WTC11 (cell line): ENCODE measurements at regions of chr1 and their contacts with region 1.

Region 1: DNA sequence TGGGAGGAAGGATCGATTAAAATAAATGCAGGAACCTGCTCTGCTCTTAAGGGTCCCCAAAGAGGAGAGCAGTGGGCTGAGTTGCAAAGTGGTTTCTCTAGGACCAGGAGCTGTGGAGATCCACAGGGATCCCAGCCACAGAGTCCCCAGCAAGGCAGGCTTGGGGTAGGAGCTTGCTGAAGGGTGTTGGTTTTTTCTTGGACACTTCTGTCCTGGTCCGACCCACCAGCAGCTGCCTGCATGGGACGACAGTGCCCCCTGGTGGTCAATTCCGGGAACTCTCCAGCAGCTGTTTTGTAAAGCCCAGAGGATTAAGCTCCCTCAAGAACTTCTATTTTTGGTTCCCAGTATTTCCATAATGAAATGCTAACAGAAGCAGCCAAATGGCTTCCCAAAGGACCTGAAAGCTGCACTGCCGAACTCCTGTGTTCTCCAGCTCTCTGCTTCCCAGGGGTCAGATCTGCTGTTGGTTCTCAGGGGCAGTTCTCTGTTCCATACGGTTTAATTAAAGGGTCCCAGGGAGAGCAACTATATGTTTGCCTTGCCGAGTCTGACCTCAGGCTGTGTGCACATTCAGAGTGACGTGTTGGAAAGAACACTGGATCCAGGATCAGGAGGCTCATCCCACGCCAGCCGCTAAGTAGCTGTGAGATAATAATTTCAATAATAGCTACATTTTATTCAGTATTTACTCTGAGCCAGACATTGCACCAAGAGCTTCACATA is 23.2 kb downstream of the NENF start:
- DNase-seq: peak; percentile 93
- ATAC-seq: peak; percentile 79
- H3K4me3 Mint-ChIP-seq: no peak overlapping the region
- H3K27ac Mint-ChIP-seq: no peak overlapping the region
- H3K4me1 Mint-ChIP-seq: no peaks in the 10 kb centered on the region
- H3K27me3 Mint-ChIP-seq: no peaks in the 10 kb centered on the region
- CTCF ChIP-seq: peak; percentile 99

Region 2: DNA sequence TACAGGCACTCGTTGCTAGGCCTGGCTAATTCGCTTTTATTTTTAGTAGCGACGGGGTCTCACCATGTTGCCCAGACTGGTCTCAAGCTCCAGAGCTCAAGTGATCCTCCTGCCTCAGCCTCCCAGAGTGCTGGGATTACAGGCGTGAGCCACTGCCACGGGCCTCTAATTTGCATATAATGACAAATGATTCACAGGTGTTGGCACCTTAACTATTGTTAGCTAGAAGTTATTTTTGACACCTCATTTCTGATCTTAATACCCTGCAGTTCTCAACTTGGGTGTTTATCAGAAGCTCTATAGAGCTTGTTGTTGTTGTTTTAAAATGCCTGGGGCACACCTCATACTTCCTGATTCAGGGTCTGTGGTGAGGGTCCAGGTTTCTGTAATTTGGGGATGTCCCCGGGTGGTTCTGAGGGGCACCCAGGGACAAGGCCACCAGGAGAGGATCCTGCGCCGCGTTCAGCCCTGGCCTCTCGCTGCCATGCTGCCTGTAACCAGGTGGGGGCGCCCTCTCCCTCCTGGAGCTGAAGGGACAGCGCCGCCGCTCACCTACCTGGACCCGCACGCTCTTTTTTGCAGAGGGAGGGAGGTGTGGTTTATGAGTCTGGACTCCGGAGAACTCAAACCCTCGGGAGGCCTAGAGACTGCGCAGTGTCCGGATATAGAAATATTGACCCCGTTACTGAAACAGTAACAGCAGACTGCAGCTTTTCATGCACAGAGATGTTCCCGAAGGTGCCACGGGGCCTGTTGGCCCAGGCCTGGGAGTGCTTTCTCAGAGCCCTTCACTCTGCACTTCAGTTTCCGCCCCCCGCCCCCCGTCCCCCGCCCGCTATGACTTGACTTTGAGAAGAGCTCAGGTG is 757.6 kb before region 1 on chr1:
- CTCF ChIA-PET with region 1: interaction called, 15 read pairs
- POLR2A ChIA-PET with region 1: no interaction called
- DNase-seq: peak; percentile 91
- ATAC-seq: peak; percentile 95
- H3K4me3 Mint-ChIP-seq: peak overlapping the region; percentile 80
- H3K27ac Mint-ChIP-seq: no peak overlapping the region
- H3K4me1 Mint-ChIP-seq: peaks cover 4% of the 10 kb centered on the region; the same call in 1 of the 2 replicates
- H3K27me3 Mint-ChIP-seq: peaks cover 31% of the 10 kb centered on the region
- CTCF ChIP-seq: peak; percentile 99

Region 3: GRCh38 chr1:212153635-212154034 is 302.3 kb before region 1 on chr1:
- CTCF ChIA-PET with region 1: no interaction called
- POLR2A ChIA-PET with region 1: no interaction called
- DNase-seq: no peak
- ATAC-seq: no peak
- H3K4me3 Mint-ChIP-seq: no peak overlapping the region
- H3K27ac Mint-ChIP-seq: no peak overlapping the region
- H3K4me1 Mint-ChIP-seq: peaks cover 6% of the 10 kb centered on the region
- H3K27me3 Mint-ChIP-seq: no peaks in the 10 kb centered on the region; the same call in 1 of the 2 replicates
- CTCF ChIP-seq: no peak

Region 4: DNA sequence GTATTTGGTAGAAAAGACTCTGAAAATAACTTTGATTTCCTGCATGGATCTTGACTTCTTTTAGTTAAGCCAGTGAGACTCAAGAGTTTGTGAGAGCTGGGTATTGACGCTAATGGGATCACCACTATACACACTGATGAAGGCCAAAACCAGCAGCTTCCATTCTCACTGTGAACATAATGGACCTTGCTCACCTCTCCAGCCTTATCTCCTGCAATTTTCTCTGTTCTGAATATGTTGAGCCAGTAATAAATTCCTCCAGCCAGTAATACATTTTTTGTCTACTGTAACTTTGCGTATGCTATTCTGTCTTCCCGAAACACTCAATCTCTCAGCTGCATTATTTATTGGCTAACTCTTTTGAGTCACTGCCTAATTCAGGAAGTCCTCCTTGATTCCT is 282.4 kb before region 1 on chr1:
- CTCF ChIA-PET with region 1: no interaction called
- POLR2A ChIA-PET with region 1: no interaction called
- DNase-seq: no peak
- ATAC-seq: no peak
- H3K4me3 Mint-ChIP-seq: no peak overlapping the region
- H3K27ac Mint-ChIP-seq: no peak overlapping the region
- H3K4me1 Mint-ChIP-seq: no peaks in the 10 kb centered on the region
- H3K27me3 Mint-ChIP-seq: no peaks in the 10 kb centered on the region
- CTCF ChIP-seq: no peak

Region 5: GRCh38 chr1:212284744-212285684 is 171.0 kb before region 1 on chr1 and contains the start of gene PPP2R5A:
- CTCF ChIA-PET with region 1: interaction called, 10 read pairs
- POLR2A ChIA-PET with region 1: no interaction called
- DNase-seq: peak; percentile 99
- ATAC-seq: peak; percentile 93
- H3K4me3 Mint-ChIP-seq: peak within 1 kb of the TSS; percentile 98
- H3K27ac Mint-ChIP-seq: peak within 1 kb of the TSS; percentile 99
- H3K4me1 Mint-ChIP-seq: peaks cover 36% of the 10 kb centered on the region
- H3K27me3 Mint-ChIP-seq: no peaks in the 10 kb centered on the region
- CTCF ChIP-seq: no peak
- total RNA-seq, gene PPP2R5A: 32.0 to 35.9 TPM (median 32.1 TPM) in 3 replicates

Region 6: DNA sequence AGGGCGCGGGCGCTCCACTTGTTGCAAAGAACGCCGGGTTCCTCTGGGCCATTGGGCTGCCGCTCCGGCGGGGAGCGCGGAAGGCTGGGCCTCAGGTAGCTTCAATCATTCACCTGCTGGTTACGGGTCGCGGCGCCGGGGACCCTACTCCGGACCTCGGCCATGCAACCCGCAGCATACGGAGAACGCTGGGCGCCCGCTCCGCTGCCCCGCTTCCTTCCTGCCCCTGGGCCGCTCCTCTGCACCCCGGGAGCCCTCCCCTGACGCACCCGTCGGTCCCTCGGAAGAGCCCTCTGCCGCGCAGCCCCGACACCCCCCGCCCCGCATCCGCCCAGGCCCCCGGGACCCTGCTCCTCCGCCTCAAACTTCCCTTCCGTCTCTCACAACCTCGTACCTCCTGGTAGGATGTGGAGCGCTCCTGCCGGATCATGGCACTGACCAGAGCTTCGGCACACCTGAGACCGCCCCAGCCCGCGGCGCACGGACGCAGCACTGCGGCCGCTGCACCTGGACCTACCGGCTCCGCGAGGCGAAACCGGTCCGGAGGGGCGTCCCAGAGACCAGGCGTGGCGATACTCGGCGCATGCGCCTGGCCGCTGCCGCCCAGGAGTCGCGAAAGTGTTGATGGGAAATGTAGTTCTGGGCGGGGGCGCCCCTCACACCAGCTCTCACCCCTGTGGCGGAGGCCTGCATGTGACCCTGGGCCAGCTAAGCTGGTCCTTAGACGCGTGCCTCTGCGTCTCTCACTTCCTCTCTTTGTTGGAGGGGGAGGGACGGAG is 41.4 kb before region 1 on chr1 and contains the start of gene PACC1:
- CTCF ChIA-PET with region 1: interaction called, 26 read pairs
- POLR2A ChIA-PET with region 1: no interaction called
- DNase-seq: peak; percentile 97
- ATAC-seq: peak; percentile 91
- H3K4me3 Mint-ChIP-seq: peak within 1 kb of the TSS; percentile 91
- H3K27ac Mint-ChIP-seq: peak within 1 kb of the TSS; percentile 99
- H3K4me1 Mint-ChIP-seq: peaks cover 31% of the 10 kb centered on the region
- H3K27me3 Mint-ChIP-seq: peaks cover 6% of the 10 kb centered on the region
- CTCF ChIP-seq: no peak
- total RNA-seq, gene PACC1: 15.0 to 19.5 TPM (median 15.7 TPM) in 3 replicates

Region 7: DNA sequence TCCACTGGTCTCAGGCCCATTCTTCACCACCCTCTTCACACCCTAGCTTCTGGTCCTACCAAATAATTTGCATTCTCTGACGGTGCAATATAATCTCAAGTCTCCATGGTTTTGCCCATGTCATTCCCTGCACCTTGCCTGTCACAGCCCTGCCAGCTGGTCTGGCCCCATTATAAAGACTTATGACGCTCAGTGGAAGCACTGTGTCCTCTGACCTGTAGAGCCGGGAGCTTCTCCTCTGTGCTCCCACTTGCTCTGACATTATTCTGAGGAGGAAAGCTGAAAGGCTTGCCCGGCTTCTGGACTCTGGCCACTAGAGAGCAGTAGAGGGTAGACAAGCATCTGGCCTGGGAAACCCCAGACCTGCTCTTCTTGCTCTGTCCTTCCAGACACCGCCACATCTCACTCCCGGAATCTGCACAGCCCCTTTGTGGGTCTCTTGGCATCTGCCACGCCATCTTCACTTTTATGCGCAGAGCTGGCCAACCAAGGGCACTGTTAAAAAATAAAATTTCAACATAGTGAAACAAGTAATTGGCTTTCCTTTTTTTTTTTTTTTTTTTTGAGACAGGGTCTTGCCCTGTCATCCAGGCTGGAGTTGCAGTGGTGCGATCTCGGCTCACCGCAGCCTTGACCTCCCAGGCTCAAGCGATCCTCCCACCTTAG is 21.2 kb after region 1 on chr1:
- CTCF ChIA-PET with region 1: interaction called, 55 read pairs
- POLR2A ChIA-PET with region 1: no interaction called
- DNase-seq: peak; percentile 88
- ATAC-seq: peak; percentile 96
- H3K4me3 Mint-ChIP-seq: no peak overlapping the region
- H3K27ac Mint-ChIP-seq: no peak overlapping the region
- H3K4me1 Mint-ChIP-seq: peaks cover 16% of the 10 kb centered on the region
- H3K27me3 Mint-ChIP-seq: no peaks in the 10 kb centered on the region
- CTCF ChIP-seq: peak; percentile 70

Region 8: GRCh38 chr1:212665241-212666115 is 209.5 kb after region 1 on chr1:
- CTCF ChIA-PET with region 1: interaction called, 24 read pairs
- POLR2A ChIA-PET with region 1: no interaction called
- DNase-seq: peak; percentile 93
- ATAC-seq: peak; percentile 94
- H3K4me3 Mint-ChIP-seq: peak overlapping the region; percentile 81
- H3K27ac Mint-ChIP-seq: no peak overlapping the region
- H3K4me1 Mint-ChIP-seq: peaks cover 19% of the 10 kb centered on the region
- H3K27me3 Mint-ChIP-seq: peaks cover 31% of the 10 kb centered on the region
- CTCF ChIP-seq: peak; percentile 81